ENCODE measurements at regions of chr2 and their contacts with region 1.

Region 1: DNA sequence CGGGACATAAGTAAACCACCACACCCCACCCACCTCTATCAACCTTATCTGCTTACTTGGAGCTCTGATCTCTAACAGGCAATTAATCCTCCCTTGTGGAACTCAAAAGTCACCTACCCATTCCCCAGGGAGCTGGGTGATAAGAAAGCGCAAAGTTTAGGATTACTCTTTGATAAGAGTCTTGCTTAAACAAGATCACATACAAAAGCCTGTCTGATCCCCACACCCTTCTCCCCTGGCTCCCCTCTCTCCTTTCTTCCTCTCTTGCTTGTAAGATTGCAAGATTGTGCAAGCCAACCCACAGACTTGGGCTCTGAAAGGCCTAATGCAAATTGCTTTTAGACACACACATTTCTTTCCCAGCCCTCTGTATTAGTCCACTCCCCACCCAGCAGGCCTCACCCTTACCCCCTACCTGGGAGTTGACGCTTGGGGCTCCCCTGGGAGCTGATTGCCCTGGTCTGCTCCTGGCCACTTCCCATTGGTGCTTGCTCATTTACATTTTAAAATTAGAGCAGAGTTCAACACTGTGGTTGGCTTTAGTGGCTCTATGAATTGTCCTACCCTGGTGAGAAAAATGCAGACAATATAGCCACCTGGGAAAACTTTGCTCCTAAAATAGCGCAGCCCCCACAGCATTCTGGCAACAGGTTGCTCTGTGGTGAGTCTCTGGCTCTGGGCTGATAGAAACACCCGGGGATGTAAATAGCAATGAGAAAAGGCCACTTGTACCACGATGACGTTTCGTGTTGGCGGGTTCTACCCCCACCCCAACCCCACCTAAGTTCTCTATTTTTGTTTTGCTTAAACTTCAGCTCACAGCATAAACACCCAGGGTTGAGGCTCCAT is 92.8 kb upstream of the MSH2 start:
- DNase-seq: peak in 7 of 10 donors; percentile 36 to 74 (median 54)
- H3K4me3 ChIP-seq: peak overlapping the region in 47 of 59 donors; percentile 1 to 62 (median 33)
- H3K27ac ChIP-seq: peak overlapping the region; percentile 80 to 100 (median 99)
- H3K27me3 ChIP-seq: no peaks in the 10 kb centered on the region
- CTCF ChIP-seq: peak in 1 of 56 donors; percentile 3

Region 2: GRCh38 chr2:46988733-46989481 is 321.3 kb before region 1 on chr2:
- intact Hi-C with region 1: loop called in 1 of 2 experiments (anchors 1 kb)
- DNase-seq: peak; percentile 70 to 92 (median 90)
- H3K4me3 ChIP-seq: peak overlapping the region in 14 of 59 donors; percentile 5 to 57 (median 24)
- H3K27ac ChIP-seq: peak overlapping the region; percentile 22 to 100 (median 98)
- H3K27me3 ChIP-seq: no peaks in the 10 kb centered on the region
- CTCF ChIP-seq: peak in 52 of 56 donors; percentile 5 to 77 (median 52)

Region 3: DNA sequence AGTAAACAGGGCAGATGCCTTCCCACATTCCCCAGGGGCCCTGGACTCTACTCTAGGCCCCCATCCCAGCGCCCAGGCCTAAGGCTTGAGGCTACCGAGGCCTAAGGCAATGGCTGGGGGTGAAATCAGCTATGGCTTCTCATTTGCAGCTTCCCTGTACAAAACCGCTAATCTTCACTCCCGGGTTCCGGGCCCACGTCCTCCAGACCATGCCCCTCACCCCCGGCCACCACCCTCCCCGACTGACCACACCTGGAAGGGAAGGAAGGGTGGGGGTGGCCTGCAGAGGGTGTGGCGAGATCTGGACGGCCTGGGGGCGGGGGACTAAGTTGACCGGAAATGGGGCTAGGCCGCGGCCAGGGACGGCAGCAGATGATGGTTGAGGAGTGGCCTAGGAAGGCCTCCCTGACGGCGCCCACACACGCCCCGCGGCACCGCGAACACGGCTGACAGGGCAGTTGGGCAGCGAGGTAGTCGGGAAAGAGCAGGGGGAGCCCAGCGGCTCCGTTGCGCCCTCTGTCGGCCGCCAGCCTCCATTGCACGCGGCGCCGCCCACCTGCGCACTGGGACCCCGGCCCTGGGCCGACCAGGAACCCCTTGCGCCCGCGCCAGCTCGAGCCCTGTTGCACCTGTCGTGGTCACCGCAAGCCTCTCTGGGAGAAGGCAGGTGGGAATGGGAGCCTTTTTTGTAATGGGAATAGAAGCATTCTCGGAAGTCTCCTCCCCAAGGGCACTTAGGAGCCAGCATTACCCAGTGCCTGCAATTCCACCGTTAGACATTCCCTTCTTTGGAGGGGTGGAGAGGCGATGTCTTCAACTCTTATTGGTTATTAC is 37.9 kb before region 1 on chr2:
- intact Hi-C with region 1: loop called (anchors 5 kb)
- DNase-seq: peak; percentile 48 to 80 (median 54)
- H3K4me3 ChIP-seq: peak overlapping the region; percentile 27 to 70 (median 53)
- H3K27ac ChIP-seq: peak overlapping the region; percentile 19 to 94 (median 88)
- H3K27me3 ChIP-seq: no peaks in the 10 kb centered on the region
- CTCF ChIP-seq: peak; percentile 84 to 100 (median 99)

Region 4: DNA sequence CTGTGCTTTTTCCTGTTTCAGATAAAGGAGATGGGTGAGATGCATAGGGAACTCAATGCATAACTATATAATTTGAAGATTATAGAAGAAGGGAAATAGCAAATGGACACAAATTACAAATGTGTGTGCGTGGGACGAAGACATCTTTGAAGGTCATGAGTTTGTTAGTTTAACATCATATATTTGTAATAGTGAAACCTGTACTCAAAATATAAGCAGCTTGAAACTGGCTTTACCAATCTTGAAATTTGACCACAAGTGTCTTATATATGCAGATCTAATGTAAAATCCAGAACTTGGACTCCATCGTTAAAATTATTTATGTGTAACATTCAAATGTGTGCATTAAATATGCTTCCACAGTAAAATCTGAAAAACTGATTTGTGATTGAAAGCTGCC is 76.4 kb after region 1 on chr2:
- intact Hi-C with region 1: no loop called
- DNase-seq: no peak
- H3K4me3 ChIP-seq: no peak overlapping the region
- H3K27ac ChIP-seq: no peak overlapping the region
- H3K27me3 ChIP-seq: no peaks in the 10 kb centered on the region
- CTCF ChIP-seq: no peak

Region 5: DNA sequence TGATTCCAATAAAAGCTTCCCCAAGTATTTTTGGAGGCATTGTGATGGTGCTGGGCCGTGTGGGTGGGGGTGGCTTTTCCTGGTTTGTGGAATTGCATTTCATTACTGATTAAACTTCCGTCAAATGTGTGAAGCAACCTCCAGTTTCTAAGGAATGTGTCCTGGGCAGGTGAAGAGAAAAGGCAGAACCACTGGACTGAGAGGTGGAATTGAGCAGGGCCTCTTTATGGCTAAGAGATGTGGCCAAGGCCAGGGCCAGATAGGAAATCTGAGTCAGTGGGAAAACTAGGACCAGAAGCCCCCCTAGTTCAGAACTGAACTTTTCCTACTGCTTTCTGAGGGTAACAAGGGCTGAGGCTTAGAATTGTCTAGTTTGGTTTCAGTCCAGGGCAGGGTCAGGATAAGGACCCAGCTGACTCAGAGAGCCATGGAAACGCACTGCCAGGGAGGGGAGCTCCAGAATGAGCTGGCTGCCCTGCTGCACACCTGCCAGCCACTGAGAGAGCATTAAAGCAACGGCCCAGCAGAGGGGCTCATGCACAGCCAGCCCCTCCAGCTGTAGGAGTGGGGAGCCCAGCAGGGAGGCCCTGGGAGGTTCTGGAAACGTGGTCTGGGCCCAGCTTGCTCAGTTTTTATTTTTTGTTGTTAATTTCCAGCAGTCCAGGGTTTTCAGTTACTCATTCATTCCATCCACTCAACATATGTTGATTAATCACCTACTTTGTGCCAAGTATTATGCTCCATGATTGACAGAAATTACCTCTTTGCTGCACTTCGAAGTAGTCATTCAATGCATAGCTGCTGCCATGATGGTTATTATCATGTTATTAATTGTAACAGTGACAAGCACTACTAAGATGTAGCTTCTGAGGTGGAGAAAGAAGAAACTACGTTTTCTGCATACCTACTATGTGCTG is 248.8 kb after region 1 on chr2:
- intact Hi-C with region 1: no loop called
- DNase-seq: no peak
- H3K4me3 ChIP-seq: no peak overlapping the region
- H3K27ac ChIP-seq: peak overlapping the region in 34 of 59 donors; percentile 2 to 71 (median 42)
- H3K27me3 ChIP-seq: no peaks in the 10 kb centered on the region
- CTCF ChIP-seq: no peak